Heart right ventricle (tissue), 16 donors: ENCODE measurements at regions of chr1 and their contacts with region 1.

Region 1: DNA sequence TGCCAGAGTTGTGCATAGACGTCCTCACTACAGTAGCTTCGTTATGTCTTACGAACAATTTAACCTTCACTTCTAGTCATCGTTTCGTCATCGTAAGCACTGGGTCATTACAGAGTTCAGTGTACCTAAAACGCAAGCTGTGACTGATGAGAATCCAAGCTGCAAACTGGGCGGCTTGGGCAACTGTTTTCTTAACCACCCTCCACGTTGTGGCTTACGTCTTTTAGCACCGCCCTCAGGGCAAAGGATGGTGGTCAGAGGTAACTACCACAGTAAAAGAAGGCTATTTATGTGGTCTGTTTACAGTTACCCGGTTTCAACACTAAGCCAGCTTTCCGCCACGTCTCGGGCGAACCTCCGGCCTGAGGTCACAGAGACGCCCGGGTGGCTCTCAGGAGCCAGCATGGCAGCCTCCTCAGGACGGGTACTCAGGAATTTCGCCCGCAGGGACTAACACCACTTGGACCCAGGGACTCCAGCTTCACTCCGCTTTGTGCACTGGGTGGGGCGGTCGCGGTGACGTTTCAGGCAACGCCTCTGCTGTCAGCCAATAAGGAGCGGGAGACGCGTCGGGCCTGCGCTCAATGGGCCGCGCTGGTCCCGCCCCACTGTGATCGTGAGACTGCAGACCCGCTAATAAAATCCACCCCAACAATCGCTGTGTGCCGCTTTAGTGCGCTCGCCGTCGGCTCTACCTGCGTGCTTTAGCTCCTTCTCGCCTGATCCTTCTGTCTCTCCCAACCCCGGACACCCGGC is at the start of gene CTH:
- DNase-seq: peak; percentile 96
- ATAC-seq: peak; percentile 100
- H3K4me3 ChIP-seq: peak within 1 kb of the TSS; percentile 46 to 79 (median 72)
- H3K27ac ChIP-seq: peak within 1 kb of the TSS; percentile 81 to 97 (median 90)
- H3K4me1 ChIP-seq: peaks cover 0 to 24% (median 19%) of the 10 kb centered on the region in 9 donors
- H3K27me3 ChIP-seq: peaks cover 0 to 3% (median 0%) of the 10 kb centered on the region in 7 donors
- CTCF ChIP-seq: no peak
- total RNA-seq, gene CTH: 1.5 to 2.7 (median 1.8) TPM

Region 2: DNA sequence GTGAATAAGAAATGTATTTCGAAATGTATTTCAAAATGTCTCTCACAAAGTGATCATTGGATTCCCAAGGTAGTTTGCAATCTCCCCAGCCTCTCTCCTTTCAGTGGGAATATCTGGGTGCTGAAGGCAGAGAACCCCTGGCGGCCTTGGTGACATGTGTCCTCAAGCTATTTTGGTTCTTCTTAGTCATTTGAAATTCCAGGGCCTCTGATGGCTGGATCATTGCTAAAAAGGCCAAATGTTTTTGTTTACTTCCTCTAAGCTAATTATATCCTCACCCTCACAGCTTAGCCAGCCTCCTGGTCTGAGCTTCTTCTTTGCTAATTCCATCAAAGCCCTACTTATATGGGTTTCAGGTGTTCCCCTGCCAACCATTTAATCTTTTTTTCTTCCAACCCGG is 276.6 kb before region 1 on chr1:
- intact Hi-C with region 1: loop called in 1 of 10 experiments (anchors 2 kb)
- DNase-seq: peak in 1 of 2 donors; percentile 14
- ATAC-seq: peak in 7 of 8 donors; percentile 67 to 92 (median 76)
- H3K4me3 ChIP-seq: no peak overlapping the region
- H3K27ac ChIP-seq: peak overlapping the region in 4 of 10 donors; percentile 3 to 42 (median 12)
- H3K4me1 ChIP-seq: peaks cover 0 to 10% (median 3%) of the 10 kb centered on the region in 9 donors
- H3K27me3 ChIP-seq: no peaks in the 10 kb centered on the region
- CTCF ChIP-seq: no peak

Region 3: DNA sequence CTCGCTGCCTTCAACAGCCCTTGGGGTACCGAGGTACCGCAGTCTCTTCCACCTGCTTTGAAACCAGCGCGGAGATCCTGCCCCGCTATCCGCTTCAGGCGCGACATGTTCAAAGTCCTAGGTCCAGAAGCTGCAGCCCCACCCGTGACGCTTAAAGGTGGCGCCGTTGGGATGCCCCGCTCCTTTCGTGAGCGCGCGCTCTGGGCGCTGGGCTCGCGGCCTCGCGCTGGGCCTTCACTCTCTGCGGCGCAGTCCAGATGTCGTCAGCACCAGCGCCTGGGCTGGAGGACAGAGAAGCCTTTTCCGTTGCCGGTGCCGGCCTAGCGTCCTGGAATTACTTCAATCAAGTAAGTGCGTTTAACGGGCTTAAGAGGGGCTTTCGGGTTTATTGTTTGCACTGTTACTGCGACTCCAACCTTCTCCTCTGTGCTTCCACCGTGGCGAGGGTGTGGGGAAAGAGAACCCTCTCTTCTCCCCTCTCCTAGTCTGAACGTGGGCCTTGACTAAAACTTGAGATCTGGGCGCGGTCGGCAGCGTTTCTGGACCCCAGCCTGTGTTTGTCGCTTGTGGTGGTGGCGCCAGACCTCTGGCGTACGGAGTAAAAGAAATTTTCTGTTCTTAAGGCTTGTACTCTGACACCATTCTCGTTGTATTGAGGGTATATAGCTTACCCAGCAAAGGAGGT is 205.2 kb before region 1 on chr1 and contains the start of gene LRRC40:
- intact Hi-C with region 1: loop called in 2 of 10 experiments (anchors 5 to 10 kb)
- DNase-seq: peak; percentile 96
- ATAC-seq: peak; percentile 99 to 100 (median 99)
- H3K4me3 ChIP-seq: peak within 1 kb of the TSS; percentile 57 to 100 (median 78)
- H3K27ac ChIP-seq: peak within 1 kb of the TSS; percentile 73 to 97 (median 91)
- H3K4me1 ChIP-seq: peaks cover 0 to 70% (median 52%) of the 10 kb centered on the region in 9 donors
- H3K27me3 ChIP-seq: no peaks in the 10 kb centered on the region
- CTCF ChIP-seq: no peak
- total RNA-seq, gene LRRC40: 10.0 to 12.2 (median 11.2) TPM

Region 4: GRCh38 chr1:70277875-70278274 is 132.9 kb before region 1 on chr1:
- intact Hi-C with region 1: no loop called
- DNase-seq: no peak
- ATAC-seq: no peak
- H3K4me3 ChIP-seq: no peak overlapping the region
- H3K27ac ChIP-seq: no peak overlapping the region
- H3K4me1 ChIP-seq: no peaks in the 10 kb centered on the region
- H3K27me3 ChIP-seq: no peaks in the 10 kb centered on the region
- CTCF ChIP-seq: no peak

Region 5: GRCh38 chr1:70354332-70355110 is 56.3 kb before region 1 on chr1 and contains the start of gene ANKRD13C:
- intact Hi-C with region 1: loop called in 7 of 10 experiments (anchors 2 to 10 kb)
- DNase-seq: peak; percentile 89 to 96
- ATAC-seq: peak; percentile 98 to 99 (median 99)
- H3K4me3 ChIP-seq: peak within 1 kb of the TSS; percentile 67 to 94 (median 86)
- H3K27ac ChIP-seq: peak within 1 kb of the TSS; percentile 56 to 95 (median 90)
- H3K4me1 ChIP-seq: peaks cover 0 to 58% (median 38%) of the 10 kb centered on the region in 9 donors
- H3K27me3 ChIP-seq: no peaks in the 10 kb centered on the region
- CTCF ChIP-seq: peak in 1 of 9 donors; percentile 15
- total RNA-seq, gene ANKRD13C: 8.4 to 12.5 (median 10.1) TPM